Ovary (tissue), 10 donors: ENCODE measurements at regions of chr6 and their contacts with region 1.

Region 1: DNA sequence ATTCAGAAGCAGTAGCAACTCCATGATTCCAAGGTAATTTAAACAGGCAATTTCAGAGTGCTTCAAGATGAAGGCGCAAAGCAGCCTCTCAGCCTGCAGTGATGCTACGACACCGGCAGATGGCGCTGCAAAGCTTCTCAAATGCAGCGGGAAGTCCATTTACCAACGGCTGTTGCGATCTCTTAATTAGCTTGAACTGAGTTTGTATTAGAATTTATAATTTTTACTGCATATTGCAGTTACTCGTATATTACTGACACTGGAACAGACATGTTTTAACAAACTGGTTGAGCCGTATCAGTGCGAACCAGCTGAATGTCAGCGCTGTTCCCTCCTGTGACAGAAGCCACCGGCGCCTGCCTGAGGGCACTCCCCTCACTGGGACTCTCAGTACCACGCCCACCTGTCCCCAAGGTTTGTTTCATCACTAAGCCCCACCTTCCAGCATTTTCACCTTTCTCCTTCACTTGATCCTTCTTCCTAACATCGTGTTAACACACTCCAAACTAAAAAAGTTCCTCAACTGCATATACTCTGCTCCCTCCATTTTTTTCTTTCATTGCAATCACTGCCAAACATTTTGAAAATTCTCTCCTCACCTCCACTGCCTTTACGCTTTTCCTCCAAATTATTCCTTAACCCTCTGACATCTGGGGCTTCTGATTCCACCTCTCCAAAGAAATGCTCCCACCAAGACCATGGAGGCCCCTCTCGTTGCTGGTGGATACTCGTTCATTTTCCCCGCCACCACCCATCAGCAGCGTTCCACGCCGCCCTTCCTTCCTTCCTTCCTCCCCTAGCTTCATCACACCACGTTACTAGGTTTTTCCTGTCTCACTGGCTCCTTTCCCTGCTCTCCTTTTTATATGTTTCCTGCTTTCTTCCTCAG is 14.5 kb downstream of the GNL1 start:
- DNase-seq: peak; percentile 56 to 80 (median 78)
- H3K4me3 ChIP-seq: peak overlapping the region; percentile 17
- H3K27ac ChIP-seq: no peak overlapping the region
- H3K4me1 ChIP-seq: no peaks in the 10 kb centered on the region
- H3K27me3 ChIP-seq: no peaks in the 10 kb centered on the region
- CTCF ChIP-seq: peak; percentile 79 to 86 (median 82)
- EP300 ChIP-seq: no peak
- POLR2A ChIP-seq: no peak

Region 2: GRCh38 chr6:30483677-30484279 is 58.0 kb before region 1 on chr6:
- intact Hi-C with region 1: loop called in 3 of 4 experiments (anchors 5 to 10 kb)
- DNase-seq: no peak
- H3K4me3 ChIP-seq: no peak overlapping the region
- H3K27ac ChIP-seq: no peak overlapping the region
- H3K4me1 ChIP-seq: no peaks in the 10 kb centered on the region
- H3K27me3 ChIP-seq: peaks cover 2% of the 10 kb centered on the region
- CTCF ChIP-seq: peak in 2 of 3 donors; percentile 51 to 63
- EP300 ChIP-seq: no peak
- POLR2A ChIP-seq: no peak

Region 3: DNA sequence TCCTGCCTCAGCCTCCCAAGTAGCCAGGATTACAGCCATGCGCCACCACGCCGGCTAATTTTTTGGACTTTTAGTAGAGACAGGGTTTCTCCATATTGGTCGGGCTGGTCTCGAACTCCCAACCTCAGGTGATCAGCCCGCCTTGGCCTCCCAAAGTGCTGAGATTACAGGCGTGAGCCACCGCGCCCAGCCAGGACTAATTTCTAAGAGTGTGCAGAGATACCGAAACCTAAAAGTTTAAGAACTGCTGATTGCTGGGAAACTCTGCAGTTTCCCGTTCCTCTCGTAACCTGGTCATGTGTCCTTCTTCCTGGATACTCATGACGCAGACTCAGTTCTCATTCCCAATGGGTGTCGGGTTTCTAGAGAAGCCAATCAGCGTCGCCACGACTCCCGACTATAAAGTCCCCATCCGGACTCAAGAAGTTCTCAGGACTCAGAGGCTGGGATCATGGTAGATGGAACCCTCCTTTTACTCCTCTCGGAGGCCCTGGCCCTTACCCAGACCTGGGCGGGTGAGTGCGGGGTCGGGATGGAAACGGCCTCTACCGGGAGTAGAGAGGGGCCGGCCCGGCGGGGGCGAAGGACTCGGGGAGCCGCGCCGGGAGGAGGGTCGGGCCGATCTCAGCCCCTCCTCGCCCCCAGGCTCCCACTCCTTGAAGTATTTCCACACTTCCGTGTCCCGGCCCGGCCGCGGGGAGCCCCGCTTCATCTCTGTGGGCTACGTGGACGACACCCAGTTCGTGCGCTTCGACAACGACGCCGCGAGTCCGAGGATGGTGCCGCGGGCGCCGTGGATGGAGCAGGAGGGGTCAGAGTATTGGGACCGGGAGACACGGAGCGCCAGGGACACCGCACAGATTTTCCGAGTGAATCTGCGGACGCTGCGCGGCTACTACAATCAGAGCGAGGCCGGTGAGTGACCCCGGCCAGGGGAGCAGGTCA is 52.4 kb before region 1 on chr6 and contains the start of gene HLA-E:
- intact Hi-C with region 1: loop called in 3 of 4 experiments (anchors 5 to 10 kb)
- DNase-seq: peak; percentile 88 to 97 (median 92)
- H3K4me3 ChIP-seq: peak within 1 kb of the TSS; percentile 57
- H3K27ac ChIP-seq: peak within 1 kb of the TSS; percentile 84 to 98
- H3K4me1 ChIP-seq: peaks cover 4% of the 10 kb centered on the region
- H3K27me3 ChIP-seq: no peaks in the 10 kb centered on the region
- CTCF ChIP-seq: no peak
- EP300 ChIP-seq: peak; percentile 99
- POLR2A ChIP-seq: peak; percentile 98
- total RNA-seq, gene HLA-E: 181 to 322 (median 238) TPM

Region 4: GRCh38 chr6:30672445-30673253 is 130.9 kb after region 1 on chr6 and contains the start of gene DHX16:
- intact Hi-C with region 1: loop called in 1 of 4 experiments (anchors 10 kb)
- DNase-seq: peak; percentile 94 to 97 (median 96)
- H3K4me3 ChIP-seq: peak within 1 kb of the TSS; percentile 100
- H3K27ac ChIP-seq: peak within 1 kb of the TSS in 1 of 2 donors; percentile 35
- H3K4me1 ChIP-seq: peaks cover 4% of the 10 kb centered on the region
- H3K27me3 ChIP-seq: no peaks in the 10 kb centered on the region
- CTCF ChIP-seq: peak; percentile 85 to 89 (median 88)
- EP300 ChIP-seq: no peak
- POLR2A ChIP-seq: peak; percentile 18
- total RNA-seq, gene DHX16: 18.0 to 27.4 (median 22.5) TPM

Region 5: DNA sequence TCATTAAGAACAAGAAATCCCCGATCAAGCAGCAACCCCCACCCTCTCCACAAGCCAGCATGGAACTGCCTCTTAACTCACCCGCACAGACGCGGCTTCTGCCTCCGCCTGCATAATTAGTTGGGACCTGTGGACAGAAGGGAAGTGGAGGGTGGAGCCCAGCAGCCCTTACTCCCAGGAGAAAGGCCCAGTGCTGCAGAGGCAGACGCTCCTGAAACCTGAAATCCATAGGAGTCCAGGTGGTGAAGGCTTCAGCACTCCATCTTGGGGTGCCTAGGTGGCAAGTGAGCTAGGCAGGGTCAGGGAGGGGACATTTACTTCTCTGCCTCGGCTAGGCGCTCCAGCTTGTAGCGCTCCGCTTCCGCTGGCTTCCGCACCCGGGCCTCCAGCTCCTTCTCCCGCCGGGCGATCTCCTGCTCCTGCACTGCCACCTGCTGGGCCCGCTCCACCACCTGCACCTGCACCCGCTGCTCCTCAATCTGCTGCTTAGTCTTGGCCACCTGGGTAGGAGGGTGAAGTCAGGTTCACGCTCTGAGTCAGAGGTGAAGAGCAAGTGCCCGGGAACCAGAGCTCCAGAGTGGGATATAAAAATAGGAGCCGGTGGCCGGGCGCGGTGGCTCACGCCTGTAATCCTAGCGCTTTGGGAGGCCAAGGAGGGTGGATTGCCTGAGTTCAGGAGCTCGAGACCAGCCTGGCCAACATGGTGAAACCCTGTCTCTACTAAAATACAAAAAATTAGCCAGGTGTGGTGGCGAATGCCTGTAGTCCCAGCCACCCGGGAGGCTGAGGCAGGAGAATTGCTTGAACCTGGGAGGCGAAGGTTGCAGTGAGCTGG is 189.1 kb after region 1 on chr6:
- intact Hi-C with region 1: loop called in 2 of 4 experiments (anchors 10 kb)
- DNase-seq: peak in 4 of 5 donors; percentile 60 to 72 (median 64)
- H3K4me3 ChIP-seq: no peak overlapping the region
- H3K27ac ChIP-seq: no peak overlapping the region
- H3K4me1 ChIP-seq: no peaks in the 10 kb centered on the region
- H3K27me3 ChIP-seq: no peaks in the 10 kb centered on the region
- CTCF ChIP-seq: peak in 2 of 3 donors; percentile 17 to 35
- EP300 ChIP-seq: no peak
- POLR2A ChIP-seq: no peak

Region 6: DNA sequence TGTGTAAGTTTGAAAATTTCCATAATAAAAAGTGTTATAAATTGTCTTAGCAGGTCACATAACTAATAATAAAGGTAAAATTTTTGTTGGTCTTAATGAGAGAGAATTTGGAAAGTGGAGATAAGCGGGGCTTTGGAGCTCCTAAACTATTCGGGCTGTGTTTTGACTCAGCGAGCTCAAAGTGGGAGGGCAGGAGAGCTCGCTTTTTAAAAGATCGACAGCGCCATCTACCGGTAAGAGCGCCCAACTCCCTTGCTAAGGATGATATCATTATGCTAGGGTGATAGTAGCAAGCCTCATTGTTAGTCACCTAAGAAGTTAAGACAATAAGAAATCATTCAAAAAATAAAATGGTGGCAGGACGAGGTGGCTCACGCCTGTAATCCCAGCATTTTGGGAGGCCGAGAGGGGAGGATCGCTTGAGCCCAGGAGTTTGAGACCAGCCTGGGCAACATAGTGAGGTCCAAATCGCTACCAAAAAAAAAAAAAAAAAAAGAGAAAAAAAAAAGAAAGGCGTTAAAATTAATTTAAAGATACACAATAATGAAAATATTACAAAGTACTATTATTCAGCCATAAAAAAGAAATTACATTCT is 545.8 kb after region 1 on chr6:
- intact Hi-C with region 1: loop called in 2 of 4 experiments (anchors 10 kb)
- DNase-seq: peak; percentile 82 to 91 (median 87)
- H3K4me3 ChIP-seq: no peak overlapping the region
- H3K27ac ChIP-seq: no peak overlapping the region
- H3K4me1 ChIP-seq: no peaks in the 10 kb centered on the region
- H3K27me3 ChIP-seq: no peaks in the 10 kb centered on the region
- CTCF ChIP-seq: peak; percentile 50 to 70 (median 68)
- EP300 ChIP-seq: no peak
- POLR2A ChIP-seq: no peak